Right cardiac atrium (tissue), 5 donors: ENCODE measurements at regions of chr15 and their contacts with region 1.

Region 1: DNA sequence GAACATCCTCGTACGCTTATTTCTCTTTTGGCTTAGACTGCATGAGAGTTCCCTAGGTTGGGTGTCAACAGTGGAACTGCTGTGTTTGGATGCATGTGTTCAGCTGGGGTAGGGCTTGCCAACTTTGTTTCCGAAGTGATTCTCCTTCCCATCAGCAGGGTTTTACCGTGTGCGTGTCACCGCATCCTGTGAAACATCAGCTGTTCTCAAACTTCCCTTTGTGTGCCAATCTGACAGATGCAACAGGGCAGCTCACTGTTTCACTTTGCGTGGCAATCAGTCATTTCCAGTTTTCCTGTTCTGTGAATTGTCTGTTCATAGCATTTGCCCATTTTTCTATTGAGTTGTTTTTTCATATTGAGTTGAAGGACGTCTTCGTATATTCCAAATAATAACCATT is 218.8 kb downstream of the VPS13C start:
- DNase-seq: no peak
- ATAC-seq: no peak
- H3K4me3 ChIP-seq: no peak overlapping the region
- H3K27ac ChIP-seq: no peak overlapping the region
- H3K4me1 ChIP-seq: no peaks in the 10 kb centered on the region
- H3K27me3 ChIP-seq: no peaks in the 10 kb centered on the region

Region 2: DNA sequence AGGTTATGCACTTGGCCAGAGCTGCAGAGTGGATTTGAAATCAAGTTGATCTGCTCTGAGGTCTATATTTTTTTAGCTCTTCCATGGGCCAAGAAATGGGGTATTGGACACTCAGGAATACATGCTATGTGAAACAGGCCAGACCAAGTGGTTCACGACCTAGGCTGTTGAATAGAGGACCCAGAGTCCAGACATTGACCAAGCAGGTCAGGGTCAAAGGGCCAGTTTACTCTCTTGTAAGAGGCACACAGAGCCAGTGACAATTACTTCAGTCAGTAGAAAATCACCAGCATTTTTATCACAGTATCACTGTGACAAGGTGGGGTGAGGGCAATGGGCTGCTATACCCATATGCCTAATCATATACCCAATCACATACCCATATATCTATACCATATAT is 291.7 kb before region 1 on chr15:
- intact Hi-C with region 1: loop called in 1 of 4 experiments (anchors 5 kb)
- DNase-seq: no peak
- ATAC-seq: no peak
- H3K4me3 ChIP-seq: no peak overlapping the region
- H3K27ac ChIP-seq: no peak overlapping the region
- H3K4me1 ChIP-seq: no peaks in the 10 kb centered on the region
- H3K27me3 ChIP-seq: no peaks in the 10 kb centered on the region